Psoas muscle (tissue), 8 donors: ENCODE measurements at regions of chr11 and their contacts with region 1.

Region 1: DNA sequence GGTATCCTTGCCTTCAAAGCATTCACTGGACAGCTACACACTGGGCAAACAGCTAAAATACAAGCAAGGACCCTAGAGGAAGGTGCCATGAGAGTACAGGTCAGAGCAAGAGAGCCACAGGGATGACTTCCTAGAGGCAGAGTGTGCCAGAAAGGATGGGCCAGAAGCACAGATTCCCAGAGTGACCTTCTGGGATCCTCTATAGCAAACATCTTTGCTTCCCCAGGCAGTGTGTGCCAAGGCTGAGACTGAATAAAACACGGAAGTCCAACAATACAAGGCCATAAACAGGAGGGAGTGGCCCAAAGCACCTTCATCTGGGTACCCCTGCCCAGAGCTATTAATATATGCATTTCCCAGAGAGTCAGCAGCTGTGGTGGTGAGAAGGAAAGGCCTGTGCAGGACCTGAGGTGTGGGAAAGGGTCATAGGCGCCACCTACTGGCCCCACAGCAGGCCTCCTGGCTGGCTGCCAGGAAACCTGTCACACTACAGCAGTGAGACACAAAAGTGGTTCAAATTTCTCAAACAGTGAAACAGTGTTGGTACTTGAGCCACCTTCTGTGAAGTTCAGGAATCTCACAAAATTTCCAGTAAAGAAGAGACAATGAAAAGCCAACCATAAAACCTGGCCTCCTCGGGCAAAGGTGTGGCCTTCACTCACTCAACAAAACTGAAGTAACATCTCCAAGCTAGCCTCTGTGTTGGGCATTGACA is 20.3 kb downstream of the CLPB start:
- DNase-seq: peak; percentile 85 to 90
- ATAC-seq: peak; percentile 92 to 97 (median 94)
- H3K4me3 ChIP-seq: no peak overlapping the region
- H3K27ac ChIP-seq: peak overlapping the region; percentile 25
- H3K4me1 ChIP-seq: peaks cover 18% of the 10 kb centered on the region
- H3K27me3 ChIP-seq: no peaks in the 10 kb centered on the region
- CTCF ChIP-seq: peak; percentile 84

Region 2: DNA sequence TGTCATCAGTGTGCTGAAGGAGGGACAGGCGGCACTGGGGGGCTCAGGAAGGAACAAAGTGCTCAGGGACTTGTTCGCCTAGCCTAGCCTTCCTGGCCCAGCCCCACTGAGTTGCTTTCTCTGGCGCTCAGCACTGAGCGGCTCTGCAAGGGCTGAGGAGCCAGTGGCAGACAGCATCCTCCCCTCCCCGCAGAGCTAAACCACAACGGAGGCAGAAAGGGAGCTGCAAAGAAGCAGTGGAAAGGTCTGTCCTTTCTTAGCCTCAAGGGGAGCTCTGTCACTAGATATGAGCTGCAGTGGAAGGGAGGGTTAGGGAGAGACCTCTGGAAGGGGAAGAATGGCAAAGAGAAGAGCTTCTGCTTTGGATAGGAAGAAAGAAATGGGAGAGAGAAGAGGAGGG is 80.4 kb before region 1 on chr11:
- intact Hi-C with region 1: loop called in 1 of 2 experiments (anchors 5 kb)
- DNase-seq: no peak
- ATAC-seq: no peak
- H3K4me3 ChIP-seq: no peak overlapping the region
- H3K27ac ChIP-seq: no peak overlapping the region
- H3K4me1 ChIP-seq: peaks cover 20% of the 10 kb centered on the region
- H3K27me3 ChIP-seq: no peaks in the 10 kb centered on the region
- CTCF ChIP-seq: no peak

Region 3: DNA sequence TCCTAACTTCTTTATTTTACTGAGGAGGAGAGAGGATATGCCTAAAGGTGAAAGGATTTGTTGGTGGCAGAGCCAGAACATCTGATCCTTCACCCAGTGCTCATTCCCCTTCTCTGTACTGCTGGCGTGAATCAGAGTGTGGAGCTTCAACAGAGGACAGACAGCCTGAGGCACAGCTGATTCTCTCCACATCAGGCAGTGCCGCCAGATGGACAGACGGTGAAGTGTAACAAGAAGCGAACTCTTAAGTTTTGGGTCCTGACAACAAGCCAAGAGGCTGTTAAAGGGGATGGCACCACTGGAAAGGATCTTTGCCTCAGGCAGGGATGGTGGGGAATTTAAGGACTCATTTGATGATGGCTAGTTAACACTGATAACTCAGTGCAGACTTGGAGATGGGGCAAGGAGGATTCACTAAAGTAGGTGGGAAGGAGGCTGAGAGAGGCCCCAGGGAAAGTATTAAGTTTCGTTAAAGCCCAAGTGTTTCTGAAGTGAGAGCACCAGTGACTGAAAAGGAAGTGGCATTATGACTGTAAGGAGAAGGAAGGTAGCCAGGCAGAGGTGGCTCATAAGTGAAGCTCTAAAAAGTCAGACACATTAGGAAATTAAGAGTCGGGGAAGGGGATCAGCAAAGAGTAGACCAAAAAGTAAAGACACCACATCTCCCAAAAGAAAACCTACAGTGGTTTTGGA is 61.1 kb before region 1 on chr11:
- intact Hi-C with region 1: loop called in 1 of 2 experiments (anchors 5 kb)
- DNase-seq: no peak
- ATAC-seq: peak in 2 of 4 donors; percentile 37 to 63
- H3K4me3 ChIP-seq: no peak overlapping the region
- H3K27ac ChIP-seq: no peak overlapping the region
- H3K4me1 ChIP-seq: peaks cover 21% of the 10 kb centered on the region
- H3K27me3 ChIP-seq: no peaks in the 10 kb centered on the region
- CTCF ChIP-seq: no peak

Region 4: GRCh38 chr11:72625691-72626413 is 211.8 kb after region 1 on chr11:
- intact Hi-C with region 1: no loop called
- DNase-seq: peak; percentile 55 to 62
- ATAC-seq: peak; percentile 6 to 23 (median 16)
- H3K4me3 ChIP-seq: no peak overlapping the region
- H3K27ac ChIP-seq: peak overlapping the region; percentile 69
- H3K4me1 ChIP-seq: peaks cover 29% of the 10 kb centered on the region
- H3K27me3 ChIP-seq: no peaks in the 10 kb centered on the region
- CTCF ChIP-seq: no peak